ENCODE measurements at regions of chr1 and their contacts with region 1.

Region 1: DNA sequence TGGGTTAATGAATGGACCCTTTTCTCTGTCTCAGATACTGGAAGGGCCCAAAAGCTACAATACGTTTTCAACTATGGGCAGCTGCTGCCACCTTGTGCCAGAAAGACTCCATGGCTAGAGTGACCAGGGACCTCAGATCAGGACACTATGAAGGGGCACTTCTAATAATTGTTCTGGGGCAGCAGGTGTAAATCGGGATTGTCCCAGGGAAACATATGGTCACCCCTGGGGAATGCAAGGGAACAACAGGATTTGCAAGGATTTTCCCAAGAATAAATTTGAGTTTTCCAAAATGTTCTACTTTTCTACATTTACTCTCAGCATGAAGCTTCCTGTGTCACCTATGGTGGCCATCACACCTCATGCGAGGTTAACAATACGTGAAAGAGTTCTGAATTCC is 12.0 kb upstream of the FCAMR start:
- DNase-seq: peak; percentile 78
- ATAC-seq: peak; percentile 89
- H3K4me3 ChIP-seq: no peak overlapping the region
- H3K4me3 Mint-ChIP-seq: no peak overlapping the region
- H3K27ac ChIP-seq: no peak overlapping the region
- H3K27ac Mint-ChIP-seq: no peak overlapping the region
- H3K4me1 ChIP-seq: no peaks in the 10 kb centered on the region
- H3K4me1 Mint-ChIP-seq: no peaks in the 10 kb centered on the region
- H3K27me3 ChIP-seq: peaks cover 0 to 4% (median 0%) of the 10 kb centered on the region in 4 experiments
- H3K27me3 Mint-ChIP-seq: peaks cover 7% of the 10 kb centered on the region
- CTCF ChIP-seq: peak; percentile 90

Region 2: GRCh38 chr1:206469933-206470691 is 512.1 kb before region 1 on chr1 and contains the start of gene IKBKE:
- CTCF ChIA-PET with region 1: interaction called, 11 read pairs
- POLR2A ChIA-PET with region 1: no interaction called
- intact Hi-C with region 1: no loop called
- DNase-seq: peak; percentile 77
- ATAC-seq: peak; percentile 65
- H3K4me3 ChIP-seq: peak within 1 kb of the TSS; percentile 62 to 97 (median 85)
- H3K4me3 Mint-ChIP-seq: peak within 1 kb of the TSS; percentile 88
- H3K27ac ChIP-seq: peak within 1 kb of the TSS; percentile 63 to 75
- H3K27ac Mint-ChIP-seq: peak within 1 kb of the TSS; percentile 85
- H3K4me1 ChIP-seq: peaks cover 63 to 74% of the 10 kb centered on the region in 2 donors
- H3K4me1 Mint-ChIP-seq: peaks cover 73% of the 10 kb centered on the region
- H3K27me3 ChIP-seq: no peaks in the 10 kb centered on the region
- H3K27me3 Mint-ChIP-seq: no peaks in the 10 kb centered on the region
- CTCF ChIP-seq: peak; percentile 30
- total RNA-seq, gene IKBKE: 40.5 and 40.8 TPM in 2 replicates

Region 3: DNA sequence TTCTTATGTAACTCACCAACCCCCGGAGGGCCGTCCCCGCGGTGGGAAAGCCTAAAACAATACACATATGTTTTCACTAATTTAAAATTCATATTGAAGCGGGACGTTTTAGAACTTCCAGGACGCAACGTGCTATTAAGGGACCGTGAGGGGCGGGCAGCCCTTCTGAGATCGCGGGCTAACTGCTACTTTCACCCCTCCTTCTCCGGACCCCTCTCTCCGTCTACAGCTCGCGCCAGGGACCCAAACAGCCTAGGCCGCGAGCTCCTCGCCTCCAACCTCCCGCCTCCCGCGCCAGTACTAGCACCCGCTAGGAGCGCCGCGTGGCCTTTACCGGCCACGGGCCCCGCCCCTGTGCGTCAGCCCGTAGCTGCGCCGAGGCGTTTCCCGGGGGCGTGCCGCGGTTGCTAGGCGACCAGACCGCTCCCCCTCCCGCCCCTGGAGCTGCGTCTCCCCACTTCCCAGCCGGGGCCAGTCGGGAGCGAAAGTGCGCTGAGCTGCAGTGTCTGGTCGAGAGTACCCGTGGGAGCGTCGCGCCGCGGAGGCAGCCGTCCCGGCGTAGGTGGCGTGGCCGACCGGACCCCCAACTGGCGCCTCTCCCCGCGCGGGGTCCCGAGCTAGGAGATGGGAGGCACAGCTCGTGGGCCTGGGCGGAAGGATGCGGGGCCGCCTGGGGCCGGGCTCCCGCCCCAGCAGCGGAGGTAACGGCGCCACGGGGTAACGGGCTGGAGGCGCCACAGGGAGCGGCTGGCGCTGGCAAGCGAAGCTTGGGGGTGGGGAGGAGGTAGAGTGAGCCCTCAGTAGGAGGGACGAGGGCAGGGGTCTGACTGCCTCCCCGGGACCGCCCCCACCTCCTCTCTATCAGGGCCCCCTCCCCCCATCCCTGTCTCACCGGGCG is 346.9 kb before region 1 on chr1 and contains the start of gene DYRK3:
- CTCF ChIA-PET with region 1: interaction called, 217 read pairs
- POLR2A ChIA-PET with region 1: interaction called, 3 read pairs
- intact Hi-C with region 1: loop called (anchors 1 kb)
- DNase-seq: peak; percentile 89
- ATAC-seq: peak; percentile 93
- H3K4me3 ChIP-seq: peak within 1 kb of the TSS; percentile 54 to 77 (median 67)
- H3K4me3 Mint-ChIP-seq: peak within 1 kb of the TSS; percentile 92
- H3K27ac ChIP-seq: no peak within 1 kb of the TSS
- H3K27ac Mint-ChIP-seq: peak within 1 kb of the TSS; percentile 74
- H3K4me1 ChIP-seq: peaks cover 17 to 22% of the 10 kb centered on the region in 2 donors
- H3K4me1 Mint-ChIP-seq: peaks cover 29% of the 10 kb centered on the region
- H3K27me3 ChIP-seq: peaks cover 0 to 11% (median 7%) of the 10 kb centered on the region in 4 experiments
- H3K27me3 Mint-ChIP-seq: peaks cover 7% of the 10 kb centered on the region
- CTCF ChIP-seq: no peak
- total RNA-seq, gene DYRK3: 0.30 and 0.80 TPM in 2 replicates

Region 4: GRCh38 chr1:206725109-206725963 is 256.9 kb before region 1 on chr1:
- CTCF ChIA-PET with region 1: interaction called, 118 read pairs
- POLR2A ChIA-PET with region 1: no interaction called
- intact Hi-C with region 1: loop called (anchors 1 kb)
- DNase-seq: peak; percentile 68
- ATAC-seq: peak; percentile 46
- H3K4me3 ChIP-seq: no peak overlapping the region
- H3K4me3 Mint-ChIP-seq: peak overlapping the region; percentile 18
- H3K27ac ChIP-seq: no peak overlapping the region
- H3K27ac Mint-ChIP-seq: peak overlapping the region; percentile 65
- H3K4me1 ChIP-seq: peaks cover 32 to 33% of the 10 kb centered on the region in 2 donors
- H3K4me1 Mint-ChIP-seq: peaks cover 60% of the 10 kb centered on the region
- H3K27me3 ChIP-seq: no peaks in the 10 kb centered on the region
- H3K27me3 Mint-ChIP-seq: no peaks in the 10 kb centered on the region
- CTCF ChIP-seq: peak; percentile 28

Region 5: GRCh38 chr1:206808615-206809014 is 173.6 kb before region 1 on chr1:
- CTCF ChIA-PET with region 1: interaction called, 83 read pairs
- POLR2A ChIA-PET with region 1: no interaction called
- intact Hi-C with region 1: loop called (anchors 1 kb)
- DNase-seq: peak; percentile 62
- ATAC-seq: peak; percentile 81
- H3K4me3 ChIP-seq: no peak overlapping the region
- H3K4me3 Mint-ChIP-seq: no peak overlapping the region
- H3K27ac ChIP-seq: no peak overlapping the region
- H3K27ac Mint-ChIP-seq: no peak overlapping the region
- H3K4me1 ChIP-seq: peaks cover 8 to 12% of the 10 kb centered on the region in 2 donors
- H3K4me1 Mint-ChIP-seq: peaks cover 27% of the 10 kb centered on the region
- H3K27me3 ChIP-seq: no peaks in the 10 kb centered on the region
- H3K27me3 Mint-ChIP-seq: no peaks in the 10 kb centered on the region
- CTCF ChIP-seq: peak; percentile 50

Region 6: GRCh38 chr1:206912445-206913095 is 69.6 kb before region 1 on chr1:
- CTCF ChIA-PET with region 1: interaction called, 70 read pairs
- POLR2A ChIA-PET with region 1: interaction called, 3 read pairs
- intact Hi-C with region 1: loop called (anchors 1 kb)
- DNase-seq: peak; percentile 84
- ATAC-seq: peak; percentile 62
- H3K4me3 ChIP-seq: peak overlapping the region in 4 of 5 experiments; percentile 8 to 32 (median 18)
- H3K4me3 Mint-ChIP-seq: no peak overlapping the region
- H3K27ac ChIP-seq: peak overlapping the region; percentile 30 to 88
- H3K27ac Mint-ChIP-seq: peak overlapping the region; percentile 87
- H3K4me1 ChIP-seq: peaks cover 97 to 99% of the 10 kb centered on the region in 2 donors
- H3K4me1 Mint-ChIP-seq: peaks cover 94% of the 10 kb centered on the region
- H3K27me3 ChIP-seq: no peaks in the 10 kb centered on the region
- H3K27me3 Mint-ChIP-seq: no peaks in the 10 kb centered on the region
- CTCF ChIP-seq: peak; percentile 86

Region 7: GRCh38 chr1:206967096-206967849 is 14.9 kb before region 1 on chr1:
- CTCF ChIA-PET with region 1: interaction called, 77 read pairs
- POLR2A ChIA-PET with region 1: no interaction called
- intact Hi-C with region 1: no loop called
- DNase-seq: no peak
- ATAC-seq: no peak
- H3K4me3 ChIP-seq: no peak overlapping the region
- H3K4me3 Mint-ChIP-seq: no peak overlapping the region
- H3K27ac ChIP-seq: no peak overlapping the region
- H3K27ac Mint-ChIP-seq: no peak overlapping the region
- H3K4me1 ChIP-seq: peaks cover 12 to 16% of the 10 kb centered on the region in 2 donors
- H3K4me1 Mint-ChIP-seq: peaks cover 19% of the 10 kb centered on the region
- H3K27me3 ChIP-seq: peaks cover 0 to 4% (median 0%) of the 10 kb centered on the region in 4 experiments
- H3K27me3 Mint-ChIP-seq: no peaks in the 10 kb centered on the region
- CTCF ChIP-seq: no peak

Region 8: DNA sequence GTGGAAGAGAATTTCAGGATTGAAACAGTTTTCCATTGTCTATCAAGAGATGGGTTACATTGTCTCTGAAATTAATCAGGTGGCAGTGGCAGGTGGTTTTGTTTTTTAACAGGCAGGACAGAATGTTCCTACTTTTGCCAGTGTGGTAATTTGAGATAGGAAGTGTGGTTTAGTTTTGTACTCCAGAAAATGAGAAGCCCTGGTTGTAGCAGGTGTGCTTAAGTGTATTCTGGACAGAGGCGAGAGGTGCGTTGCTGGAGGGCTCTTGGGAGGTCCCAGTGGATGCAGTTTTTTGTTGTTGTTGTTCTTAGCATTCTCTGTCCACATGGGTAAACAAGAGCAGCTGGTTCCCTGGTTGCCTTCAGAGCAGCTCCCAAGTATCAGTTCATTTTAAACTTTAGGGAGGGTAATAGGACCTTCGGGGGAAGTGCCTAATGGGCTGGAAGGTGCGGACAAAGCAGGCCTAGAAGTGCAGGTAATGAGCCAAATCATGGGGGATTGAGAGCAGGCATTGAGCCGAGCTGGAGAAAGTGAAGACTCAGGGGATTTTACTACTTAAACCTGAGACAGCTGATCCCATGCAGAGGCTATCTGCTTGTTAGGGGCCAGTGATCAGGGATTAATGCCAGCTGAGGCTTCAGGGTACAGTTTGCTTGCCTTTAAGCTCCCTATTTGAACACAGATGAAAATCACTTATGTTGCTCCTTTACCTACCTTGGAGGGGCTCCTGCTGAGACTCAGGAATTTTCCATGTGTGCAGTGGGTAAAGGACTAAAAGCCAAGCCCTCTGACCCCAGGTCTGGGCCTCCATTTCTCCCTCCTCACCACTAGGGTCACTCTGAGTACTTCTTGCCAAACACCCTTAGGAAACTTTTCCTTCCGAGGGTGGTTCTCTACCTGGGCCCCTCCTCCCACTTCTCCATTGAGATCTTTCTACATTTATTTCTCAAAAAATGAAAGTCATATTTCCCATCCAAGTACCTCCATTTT is 77.0 kb after region 1 on chr1:
- CTCF ChIA-PET with region 1: no interaction called
- POLR2A ChIA-PET with region 1: no interaction called
- intact Hi-C with region 1: no loop called
- DNase-seq: no peak
- ATAC-seq: no peak
- H3K4me3 ChIP-seq: no peak overlapping the region
- H3K4me3 Mint-ChIP-seq: no peak overlapping the region
- H3K27ac ChIP-seq: no peak overlapping the region
- H3K27ac Mint-ChIP-seq: peak overlapping the region; percentile 59
- H3K4me1 ChIP-seq: peaks cover 12 to 17% of the 10 kb centered on the region in 2 donors
- H3K4me1 Mint-ChIP-seq: peaks cover 13% of the 10 kb centered on the region
- H3K27me3 ChIP-seq: no peaks in the 10 kb centered on the region
- H3K27me3 Mint-ChIP-seq: no peaks in the 10 kb centered on the region
- CTCF ChIP-seq: no peak

Region 9: DNA sequence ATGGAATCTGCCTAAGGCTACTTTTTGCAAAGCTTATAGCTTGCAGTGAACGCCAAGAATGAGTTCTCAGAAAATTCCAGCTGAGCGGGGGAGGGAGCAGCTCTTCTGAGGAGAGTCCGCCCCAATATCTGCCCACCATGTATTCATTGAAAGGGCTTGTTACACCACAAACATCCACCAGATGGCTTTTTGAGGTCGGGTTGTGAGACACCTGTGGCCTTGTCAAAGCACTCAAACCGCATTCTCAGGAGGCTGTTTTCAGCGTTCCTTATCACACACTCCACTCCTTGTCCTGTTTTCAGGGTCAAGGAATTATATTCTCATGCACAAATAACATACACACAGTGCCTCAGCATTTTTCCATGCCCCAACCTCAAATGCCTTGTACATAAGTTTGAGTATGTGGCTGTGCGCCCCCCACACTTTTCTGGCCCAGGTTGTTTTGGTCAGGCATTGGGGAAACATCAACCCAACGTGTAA is 102.5 kb after region 1 on chr1:
- CTCF ChIA-PET with region 1: no interaction called
- POLR2A ChIA-PET with region 1: no interaction called
- intact Hi-C with region 1: no loop called
- DNase-seq: peak; percentile 82
- ATAC-seq: peak; percentile 84
- H3K4me3 ChIP-seq: no peak overlapping the region
- H3K4me3 Mint-ChIP-seq: no peak overlapping the region
- H3K27ac ChIP-seq: no peak overlapping the region
- H3K27ac Mint-ChIP-seq: no peak overlapping the region
- H3K4me1 ChIP-seq: peaks cover 14 to 15% of the 10 kb centered on the region in 2 donors
- H3K4me1 Mint-ChIP-seq: peaks cover 13% of the 10 kb centered on the region
- H3K27me3 ChIP-seq: no peaks in the 10 kb centered on the region
- H3K27me3 Mint-ChIP-seq: no peaks in the 10 kb centered on the region
- CTCF ChIP-seq: peak; percentile 77

Region 10: DNA sequence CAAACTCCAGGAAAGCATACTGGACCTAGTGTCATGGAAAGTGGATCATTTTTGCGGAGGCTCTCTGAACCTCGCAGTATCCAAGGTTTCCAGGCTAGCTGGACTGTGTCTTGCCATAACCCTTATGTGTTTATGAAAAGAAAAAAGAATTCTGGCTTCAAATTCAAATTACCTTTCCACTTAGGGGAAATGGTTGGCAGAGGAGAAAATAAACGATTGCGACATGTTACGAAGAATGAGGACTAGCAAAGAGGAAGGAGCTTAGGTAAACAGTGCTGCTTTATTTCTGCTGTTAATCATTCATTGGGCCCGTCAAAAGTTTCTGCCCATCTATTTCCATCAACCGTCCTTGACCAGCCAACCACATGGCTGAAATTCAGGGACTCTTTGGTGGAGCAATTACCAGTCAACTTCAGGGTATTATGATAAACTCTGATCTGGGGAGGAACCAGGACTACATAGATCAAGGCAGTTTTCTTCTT is 121.7 kb after region 1 on chr1 and contains the start of gene C4BPA:
- CTCF ChIA-PET with region 1: no interaction called
- POLR2A ChIA-PET with region 1: no interaction called
- intact Hi-C with region 1: no loop called
- DNase-seq: no peak
- ATAC-seq: no peak
- H3K4me3 ChIP-seq: no peak within 1 kb of the TSS
- H3K4me3 Mint-ChIP-seq: no peak within 1 kb of the TSS
- H3K27ac ChIP-seq: no peak within 1 kb of the TSS
- H3K27ac Mint-ChIP-seq: no peak within 1 kb of the TSS
- H3K4me1 ChIP-seq: no peaks in the 10 kb centered on the region
- H3K4me1 Mint-ChIP-seq: no peaks in the 10 kb centered on the region
- H3K27me3 ChIP-seq: peaks cover 0 to 7% (median 1%) of the 10 kb centered on the region in 4 experiments
- H3K27me3 Mint-ChIP-seq: peaks cover 47% of the 10 kb centered on the region
- CTCF ChIP-seq: no peak
- total RNA-seq, gene C4BPA: not detected in 2 replicates

Measured in B cell (primary cell).